K562 (cell line): ENCODE measurements at regions of chr7 and their contacts with region 1.

Region 1: GRCh38 chr7:103106005-103106702 is 31.2 kb downstream of the ARMC10 start:
- DNase-seq: peak in 1 of 4 experiments; percentile 19
- ATAC-seq: no peak; the same call in 2 of the 3 replicates
- H3K4me3 ChIP-seq: no peak overlapping the region
- H3K27ac ChIP-seq: no peak overlapping the region
- H3K4me1 ChIP-seq: no peaks in the 10 kb centered on the region; a peak in 1 of 5 replicates
- H3K27me3 ChIP-seq: no peaks in the 10 kb centered on the region
- CTCF ChIP-seq: no peak
- EP300 ChIP-seq: no peak
- POLR2A ChIP-seq: no peak
- RAD21 ChIP-seq: no peak

Region 2: DNA sequence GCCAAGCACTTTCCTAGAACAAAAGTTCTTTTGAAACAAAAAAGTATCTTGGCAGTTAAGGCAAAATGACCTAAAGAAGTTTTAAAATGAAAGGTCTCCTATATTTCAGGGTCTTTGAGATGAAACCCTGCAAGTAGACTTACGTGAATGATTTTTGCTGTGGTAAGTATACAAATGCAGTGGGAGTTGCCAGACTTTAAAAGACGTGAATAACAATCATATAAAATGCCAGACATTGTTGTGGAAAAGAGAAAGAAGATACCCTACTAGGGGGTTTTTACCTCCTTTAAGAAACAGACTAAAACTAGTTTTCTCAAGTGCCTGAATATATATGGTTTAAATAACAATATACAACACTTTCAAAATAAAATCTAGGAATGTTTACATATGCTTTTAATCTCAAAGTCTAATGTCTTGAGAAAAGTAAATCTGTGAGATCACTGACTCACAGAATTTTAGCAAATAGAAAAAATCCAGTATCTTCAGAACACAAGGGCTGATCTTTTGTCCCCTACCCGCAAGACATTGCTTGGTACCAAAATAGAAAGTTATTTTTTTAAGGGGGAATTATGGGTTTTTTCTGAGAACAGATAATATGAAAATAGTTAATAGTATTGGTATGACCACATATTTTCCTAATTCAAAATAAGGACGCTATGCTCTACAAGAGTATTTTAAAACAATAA is 163.8 kb before region 1 on chr7:
- CTCF ChIA-PET with region 1: no interaction called
- POLR2A ChIA-PET with region 1: no interaction called
- in situ Hi-C with region 1: no loop called
- intact Hi-C with region 1: no loop called
- DNase-seq: no peak
- ATAC-seq: no peak
- H3K4me3 ChIP-seq: no peak overlapping the region
- H3K27ac ChIP-seq: no peak overlapping the region
- H3K4me1 ChIP-seq: peaks cover 0 to 8% of the 10 kb centered on the region in 2 experiments; a peak in 2 of 5 replicates
- H3K27me3 ChIP-seq: no peaks in the 10 kb centered on the region
- CTCF ChIP-seq: no peak
- EP300 ChIP-seq: no peak
- POLR2A ChIP-seq: no peak
- RAD21 ChIP-seq: no peak

Region 3: DNA sequence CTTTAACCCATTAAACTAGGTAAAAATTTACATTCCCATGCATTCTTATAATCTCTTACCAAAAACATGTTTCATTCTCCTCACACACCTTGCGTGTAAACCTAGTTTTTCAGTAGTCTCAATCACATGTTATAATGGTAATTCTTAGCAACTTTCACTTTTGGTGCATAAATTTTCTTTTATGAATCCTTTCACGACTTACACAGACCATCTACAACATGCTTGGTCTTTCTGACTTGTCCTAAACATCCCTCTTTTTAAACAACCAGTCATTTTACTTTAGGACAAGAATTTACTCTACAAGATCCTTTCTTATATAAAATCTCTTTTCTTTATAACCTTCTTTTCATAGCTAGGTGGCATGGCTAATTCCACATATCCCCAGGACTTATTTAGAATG is 57.3 kb before region 1 on chr7:
- CTCF ChIA-PET with region 1: no interaction called
- POLR2A ChIA-PET with region 1: no interaction called
- in situ Hi-C with region 1: no loop called
- intact Hi-C with region 1: no loop called
- DNase-seq: peak in 1 of 4 experiments; percentile 38
- ATAC-seq: no peak
- H3K4me3 ChIP-seq: no peak overlapping the region
- H3K27ac ChIP-seq: no peak overlapping the region
- H3K4me1 ChIP-seq: no peaks in the 10 kb centered on the region
- H3K27me3 ChIP-seq: no peaks in the 10 kb centered on the region
- CTCF ChIP-seq: no peak
- EP300 ChIP-seq: no peak
- POLR2A ChIP-seq: no peak
- RAD21 ChIP-seq: no peak

Region 4: GRCh38 chr7:103094102-103094501 is 12.1 kb before region 1 on chr7:
- CTCF ChIA-PET with region 1: no interaction called
- POLR2A ChIA-PET with region 1: interaction called, 11 read pairs
- in situ Hi-C with region 1: no loop called
- intact Hi-C with region 1: no loop called
- DNase-seq: no peak
- ATAC-seq: peak; percentile 58
- H3K4me3 ChIP-seq: no peak overlapping the region
- H3K27ac ChIP-seq: no peak overlapping the region
- H3K4me1 ChIP-seq: no peaks in the 10 kb centered on the region
- H3K27me3 ChIP-seq: no peaks in the 10 kb centered on the region
- CTCF ChIP-seq: peak in 1 of 3 experiments; percentile 52; a peak in 2 of 6 replicates
- EP300 ChIP-seq: no peak
- POLR2A ChIP-seq: no peak
- RAD21 ChIP-seq: peak in 1 of 2 experiments; percentile 69; a peak in 2 of 4 replicates